PC-9 (cell line): ENCODE measurements at regions of chr6 and their contacts with region 1.

Region 1: GRCh38 chr6:136550330-136551071 is at the start of gene MAP7:
- DNase-seq: peak; percentile 85 to 95
- H3K4me3 ChIP-seq: peak within 1 kb of the TSS; percentile 85
- H3K27ac ChIP-seq: peak within 1 kb of the TSS; percentile 49
- H3K4me1 ChIP-seq: peaks cover 28% of the 10 kb centered on the region
- H3K27me3 ChIP-seq: no peaks in the 10 kb centered on the region
- CTCF ChIP-seq: peak; percentile 92
- total RNA-seq, gene MAP7: 27.5 and 33.7 TPM in 2 replicates

Region 2: GRCh38 chr6:135506270-135506997 is 1044.1 kb before region 1 on chr6:
- CTCF ChIA-PET with region 1: no interaction called
- POLR2A ChIA-PET with region 1: no interaction called
- intact Hi-C with region 1: loop called (anchors 5 kb)
- DNase-seq: peak; percentile 3 to 45
- H3K4me3 ChIP-seq: no peak overlapping the region
- H3K27ac ChIP-seq: no peak overlapping the region
- H3K4me1 ChIP-seq: no peaks in the 10 kb centered on the region; the same call in 1 of the 2 replicates
- H3K27me3 ChIP-seq: no peaks in the 10 kb centered on the region
- CTCF ChIP-seq: peak; percentile 81

Region 3: GRCh38 chr6:136249811-136250685 is 300.5 kb before region 1 on chr6 and contains the start of gene MTFR2:
- CTCF ChIA-PET with region 1: no interaction called
- POLR2A ChIA-PET with region 1: no interaction called
- intact Hi-C with region 1: loop called (anchors 5 kb)
- DNase-seq: peak; percentile 93 to 100
- H3K4me3 ChIP-seq: peak within 1 kb of the TSS; percentile 79
- H3K27ac ChIP-seq: peak within 1 kb of the TSS; percentile 13; the same call in 1 of the 2 replicates
- H3K4me1 ChIP-seq: peaks cover 20% of the 10 kb centered on the region
- H3K27me3 ChIP-seq: no peaks in the 10 kb centered on the region
- CTCF ChIP-seq: no peak
- total RNA-seq, gene MTFR2: 10.5 and 12.6 TPM in 2 replicates

Region 4: DNA sequence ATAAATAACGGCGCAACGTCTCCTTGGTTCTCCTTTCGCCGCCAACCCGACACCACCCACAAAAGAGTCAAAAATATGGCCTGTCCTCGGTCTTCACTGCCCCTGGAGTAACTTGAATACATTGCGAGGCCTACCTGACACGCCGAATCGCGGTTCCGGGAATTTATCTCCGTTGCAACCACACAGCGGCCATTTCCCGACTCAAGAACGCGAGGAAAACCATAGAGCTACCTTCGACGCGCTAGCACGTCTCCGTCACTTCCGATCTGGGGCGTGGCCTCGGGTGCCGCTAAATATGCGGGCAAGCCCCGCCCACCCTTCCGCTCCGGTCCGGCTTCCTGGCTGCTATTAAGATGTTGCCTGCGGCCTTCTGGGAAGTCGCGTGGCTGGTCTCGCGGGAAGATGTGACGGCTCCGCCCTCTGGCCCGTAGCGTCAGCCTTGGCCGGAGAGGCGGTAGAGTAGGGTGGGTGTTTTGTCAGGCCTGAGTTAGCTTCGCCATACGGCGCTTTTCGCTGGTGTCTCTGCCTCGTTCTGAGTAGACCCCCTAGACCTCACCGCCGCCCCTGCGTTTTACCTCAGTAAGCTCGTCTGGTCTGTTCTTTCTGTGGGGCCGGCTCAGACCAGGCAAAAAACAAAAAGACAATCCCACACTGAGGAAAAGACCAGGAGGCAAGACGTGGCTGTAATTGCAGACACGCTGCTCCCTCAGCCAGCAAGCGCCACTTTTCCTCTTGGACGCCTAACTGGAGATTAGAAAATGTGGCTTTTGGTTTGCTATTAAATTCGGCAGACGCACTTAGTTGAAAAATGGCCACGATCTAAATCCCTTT is 260.7 kb before region 1 on chr6 and contains the start of gene BCLAF1:
- CTCF ChIA-PET with region 1: no interaction called
- POLR2A ChIA-PET with region 1: interaction called, 4 read pairs
- intact Hi-C with region 1: loop called (anchors 2 kb)
- DNase-seq: peak; percentile 98 to 99
- H3K4me3 ChIP-seq: peak within 1 kb of the TSS; percentile 93
- H3K27ac ChIP-seq: peak within 1 kb of the TSS; percentile 97
- H3K4me1 ChIP-seq: peaks cover 51% of the 10 kb centered on the region
- H3K27me3 ChIP-seq: no peaks in the 10 kb centered on the region
- CTCF ChIP-seq: no peak
- total RNA-seq, gene BCLAF1: 76.4 and 109 TPM in 2 replicates

Region 5: GRCh38 chr6:136317021-136317694 is 233.3 kb before region 1 on chr6:
- CTCF ChIA-PET with region 1: no interaction called
- POLR2A ChIA-PET with region 1: no interaction called
- intact Hi-C with region 1: loop called (anchors 1 kb)
- DNase-seq: peak; percentile 45 to 60
- H3K4me3 ChIP-seq: no peak overlapping the region
- H3K27ac ChIP-seq: no peak overlapping the region
- H3K4me1 ChIP-seq: no peaks in the 10 kb centered on the region
- H3K27me3 ChIP-seq: no peaks in the 10 kb centered on the region
- CTCF ChIP-seq: peak; percentile 94

Region 6: DNA sequence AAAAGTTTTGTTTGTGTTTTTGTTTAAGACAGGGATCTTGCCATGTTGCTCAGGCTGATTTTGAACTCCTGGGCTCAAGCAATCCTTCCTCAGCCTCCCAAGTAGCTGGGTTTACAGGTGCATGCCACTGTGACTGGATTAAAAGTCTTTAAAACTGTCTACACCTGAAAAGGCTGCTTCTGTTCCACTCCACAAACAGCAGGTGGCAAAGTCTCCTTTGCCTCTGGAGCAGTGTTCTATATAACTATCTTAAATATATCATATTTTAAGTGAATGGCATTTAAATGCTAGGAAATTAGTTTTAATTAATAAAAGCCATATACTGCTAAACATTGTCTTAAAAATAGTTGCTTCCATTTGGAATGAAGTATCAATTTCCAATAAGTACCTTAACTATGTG is 171.6 kb before region 1 on chr6:
- CTCF ChIA-PET with region 1: no interaction called
- POLR2A ChIA-PET with region 1: no interaction called
- intact Hi-C with region 1: loop called (anchors 10 kb)
- DNase-seq: no peak
- H3K4me3 ChIP-seq: no peak overlapping the region
- H3K27ac ChIP-seq: no peak overlapping the region
- H3K4me1 ChIP-seq: no peaks in the 10 kb centered on the region
- H3K27me3 ChIP-seq: no peaks in the 10 kb centered on the region
- CTCF ChIP-seq: peak; percentile 60